ENCODE measurements at regions of chr2 and their contacts with region 1.

Region 1: DNA sequence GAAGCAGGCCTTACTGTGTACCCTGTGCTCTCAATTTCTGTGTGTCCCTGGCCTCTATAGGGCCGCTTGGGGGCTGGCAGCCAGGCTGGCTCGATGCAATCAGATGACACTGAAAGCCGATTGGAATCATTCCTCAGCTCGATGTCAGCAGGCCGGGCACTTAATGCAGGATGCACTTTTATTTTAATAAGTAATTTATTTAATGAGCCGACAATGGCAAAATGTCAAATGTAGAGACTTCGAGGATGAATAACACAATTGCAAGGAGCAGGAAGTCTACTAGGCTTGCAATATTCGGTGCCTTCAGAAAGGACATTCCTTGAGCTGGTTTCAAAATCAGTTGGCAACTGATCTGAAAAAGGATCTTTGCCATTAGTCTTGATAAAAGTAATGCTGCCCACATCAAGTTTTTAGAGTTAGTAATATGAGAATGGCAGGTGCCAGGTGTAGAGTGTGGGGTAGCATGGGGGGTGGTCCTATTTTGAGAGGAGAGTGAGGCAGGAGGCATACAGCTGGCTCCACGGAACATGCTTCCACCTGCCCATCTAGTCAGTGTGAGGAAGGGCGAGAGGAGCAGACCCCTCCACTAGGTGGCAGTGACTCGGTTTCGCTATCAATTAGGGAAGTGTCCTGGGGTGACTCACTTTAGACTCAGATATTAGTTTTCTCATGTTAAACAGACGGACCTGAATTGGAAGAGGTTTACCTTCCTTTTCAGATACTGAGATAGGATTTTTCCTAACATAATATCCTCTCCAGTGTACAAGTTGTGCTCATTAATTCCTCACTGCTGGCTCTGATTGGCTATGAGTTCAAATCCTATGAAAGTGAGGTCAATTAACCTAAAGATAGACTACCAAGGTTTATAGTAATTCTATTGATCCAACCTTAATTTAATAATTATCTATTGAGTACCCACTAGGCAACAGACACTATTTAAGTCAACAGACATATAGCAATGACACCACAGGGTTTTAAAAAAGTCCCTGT is 80.9 kb downstream of the NABP1 start:
- DNase-seq: peak; percentile 8
- H3K4me3 Mint-ChIP-seq: no peak overlapping the region
- H3K27ac Mint-ChIP-seq: no peak overlapping the region
- H3K4me1 Mint-ChIP-seq: peaks cover 5% of the 10 kb centered on the region
- H3K27me3 Mint-ChIP-seq: peaks cover 6% of the 10 kb centered on the region

Region 2: GRCh38 chr2:191714925-191715324 is 43.9 kb before region 1 on chr2:
- intact Hi-C with region 1: loop called (anchors 5 kb)
- DNase-seq: no peak
- H3K4me3 Mint-ChIP-seq: no peak overlapping the region
- H3K27ac Mint-ChIP-seq: no peak overlapping the region
- H3K4me1 Mint-ChIP-seq: no peaks in the 10 kb centered on the region
- H3K27me3 Mint-ChIP-seq: peaks cover 3% of the 10 kb centered on the region

Measured in activated T-helper 1 cell treated with anti-CD3 and anti-CD28 coated beads, Interleukin-12 subunit alpha, Interleukin-12 subunit beta, Interleukin-2, Interleukin-4 antibody, amounts not matched to agents 30 ng/mL and 10 ng/mL and 1 ng/mL, durations not matched to agents 14 hours and 24 hours and 36 hours (primary cell).